ENCODE measurements at regions of chr14 and their contacts with region 1.

Region 1: GRCh38 chr14:80941241-80942182 is at the start of gene CEP128:
- DNase-seq: peak; percentile 70
- ATAC-seq: peak; percentile 95
- H3K4me3 Mint-ChIP-seq: peak within 1 kb of the TSS; percentile 90
- H3K27ac Mint-ChIP-seq: peak within 1 kb of the TSS; percentile 70
- H3K4me1 Mint-ChIP-seq: peaks cover 32% of the 10 kb centered on the region
- H3K27me3 Mint-ChIP-seq: peaks cover 3% of the 10 kb centered on the region
- CTCF ChIP-seq: no peak
- total RNA-seq, gene CEP128: 21.1 and 25.0 TPM in 2 replicates

Region 2: GRCh38 chr14:80930836-80931389 is 10.6 kb before region 1 on chr14:
- CTCF ChIA-PET with region 1: no interaction called
- POLR2A ChIA-PET with region 1: interaction called, 15 read pairs
- intact Hi-C with region 1: loop called (anchors 1 kb)
- DNase-seq: no peak
- ATAC-seq: peak; percentile 97
- H3K4me3 Mint-ChIP-seq: peak overlapping the region; percentile 66
- H3K27ac Mint-ChIP-seq: peak overlapping the region; percentile 79
- H3K4me1 Mint-ChIP-seq: peaks cover 24% of the 10 kb centered on the region
- H3K27me3 Mint-ChIP-seq: no peaks in the 10 kb centered on the region
- CTCF ChIP-seq: no peak

Region 3: DNA sequence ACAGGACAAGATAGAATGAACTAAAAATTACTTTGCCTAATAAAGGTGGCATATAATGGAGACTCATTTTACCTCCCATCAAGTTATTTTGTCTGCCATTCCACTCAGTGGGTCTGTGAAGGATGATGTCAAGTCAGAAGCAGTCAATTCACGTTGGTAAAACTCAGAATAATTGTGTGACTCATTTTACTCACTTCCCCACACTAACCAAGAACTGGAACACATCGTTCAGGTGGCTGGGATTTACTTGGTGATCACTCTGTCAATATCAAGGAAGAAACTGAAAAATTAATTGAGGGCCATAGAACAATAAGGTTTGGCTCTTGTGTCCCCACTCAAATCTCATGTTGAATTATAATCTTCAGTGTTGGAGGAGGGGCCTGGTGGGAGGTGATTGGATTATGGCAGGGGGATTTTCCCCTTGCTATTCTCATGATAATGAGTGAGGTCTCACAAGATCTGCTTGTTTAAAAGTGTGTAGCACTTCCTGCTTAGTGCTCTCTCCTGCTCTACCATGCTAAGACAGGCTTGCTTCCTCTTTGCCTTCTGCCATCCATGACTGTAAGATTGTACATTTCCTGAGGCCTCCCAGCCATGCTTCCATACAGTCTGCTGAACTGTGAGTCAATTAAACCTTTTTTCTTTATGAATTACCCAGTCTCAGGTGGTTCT is 314.9 kb after region 1 on chr14:
- CTCF ChIA-PET with region 1: no interaction called
- POLR2A ChIA-PET with region 1: no interaction called
- intact Hi-C with region 1: loop called (anchors 1 kb)
- DNase-seq: no peak
- ATAC-seq: peak; percentile 90
- H3K4me3 Mint-ChIP-seq: peak overlapping the region; percentile 52
- H3K27ac Mint-ChIP-seq: peak overlapping the region; percentile 73
- H3K4me1 Mint-ChIP-seq: peaks cover 19% of the 10 kb centered on the region
- H3K27me3 Mint-ChIP-seq: peaks cover 10% of the 10 kb centered on the region
- CTCF ChIP-seq: no peak

Region 4: DNA sequence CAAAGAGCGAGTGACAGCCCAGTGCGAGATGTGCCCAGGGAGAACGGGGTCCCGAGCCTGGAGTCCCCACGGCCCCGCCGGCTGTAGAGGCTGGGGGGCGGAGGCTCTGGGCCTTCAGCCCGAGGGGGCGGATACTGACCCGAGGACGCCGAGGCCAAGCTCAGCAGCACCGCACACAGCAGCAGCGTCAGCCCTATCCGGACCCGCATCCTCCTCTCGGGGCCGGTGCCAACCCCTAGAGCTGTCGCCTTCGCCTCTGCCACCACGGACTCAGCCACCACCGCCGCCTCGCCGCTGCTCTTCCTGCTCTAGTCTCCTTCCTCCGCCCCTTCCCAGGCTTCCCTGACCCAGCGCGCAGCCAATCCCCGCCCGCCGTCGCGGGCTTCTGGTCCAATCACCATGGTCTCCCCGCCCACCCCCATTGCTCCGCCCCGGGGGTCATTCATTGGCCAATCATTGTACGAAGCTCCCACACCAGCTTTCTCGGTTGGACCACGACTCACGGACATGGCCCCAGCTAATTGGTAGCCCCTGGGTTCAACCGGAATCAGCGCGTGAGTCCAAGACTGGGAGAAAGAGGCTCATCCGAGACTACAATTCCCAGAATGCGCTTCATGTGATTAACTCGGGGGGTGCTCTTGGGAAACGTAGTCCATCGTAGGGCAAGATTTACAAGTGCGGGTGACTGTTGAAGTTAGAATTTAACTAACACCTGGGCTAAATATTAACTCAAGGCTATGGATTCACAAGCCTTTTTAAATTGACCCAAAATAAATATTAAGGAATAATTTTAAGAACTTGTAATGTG is 592.2 kb after region 1 on chr14 and contains the start of gene SEL1L:
- CTCF ChIA-PET with region 1: no interaction called
- POLR2A ChIA-PET with region 1: interaction called, 3 read pairs
- intact Hi-C with region 1: loop called (anchors 1 kb)
- DNase-seq: peak; percentile 99
- ATAC-seq: peak; percentile 96
- H3K4me3 Mint-ChIP-seq: peak within 1 kb of the TSS; percentile 96
- H3K27ac Mint-ChIP-seq: peak within 1 kb of the TSS; percentile 85
- H3K4me1 Mint-ChIP-seq: peaks cover 58% of the 10 kb centered on the region
- H3K27me3 Mint-ChIP-seq: no peaks in the 10 kb centered on the region
- CTCF ChIP-seq: no peak
- total RNA-seq, gene SEL1L: 52.9 and 55.4 TPM in 2 replicates